ENCODE measurements at regions of chr16 and their contacts with region 1.

Region 1: GRCh38 chr16:4416200-4417032 is at the start of gene CORO7:
- DNase-seq: peak; percentile 96
- H3K4me3 ChIP-seq: peak within 1 kb of the TSS; percentile 98
- H3K27ac ChIP-seq: peak within 1 kb of the TSS; percentile 75
- H3K4me1 ChIP-seq: peaks cover 30% of the 10 kb centered on the region
- CTCF ChIP-seq: no peak
- total RNA-seq, gene CORO7: 64.0 and 77.2 TPM in 2 replicates

Region 2: DNA sequence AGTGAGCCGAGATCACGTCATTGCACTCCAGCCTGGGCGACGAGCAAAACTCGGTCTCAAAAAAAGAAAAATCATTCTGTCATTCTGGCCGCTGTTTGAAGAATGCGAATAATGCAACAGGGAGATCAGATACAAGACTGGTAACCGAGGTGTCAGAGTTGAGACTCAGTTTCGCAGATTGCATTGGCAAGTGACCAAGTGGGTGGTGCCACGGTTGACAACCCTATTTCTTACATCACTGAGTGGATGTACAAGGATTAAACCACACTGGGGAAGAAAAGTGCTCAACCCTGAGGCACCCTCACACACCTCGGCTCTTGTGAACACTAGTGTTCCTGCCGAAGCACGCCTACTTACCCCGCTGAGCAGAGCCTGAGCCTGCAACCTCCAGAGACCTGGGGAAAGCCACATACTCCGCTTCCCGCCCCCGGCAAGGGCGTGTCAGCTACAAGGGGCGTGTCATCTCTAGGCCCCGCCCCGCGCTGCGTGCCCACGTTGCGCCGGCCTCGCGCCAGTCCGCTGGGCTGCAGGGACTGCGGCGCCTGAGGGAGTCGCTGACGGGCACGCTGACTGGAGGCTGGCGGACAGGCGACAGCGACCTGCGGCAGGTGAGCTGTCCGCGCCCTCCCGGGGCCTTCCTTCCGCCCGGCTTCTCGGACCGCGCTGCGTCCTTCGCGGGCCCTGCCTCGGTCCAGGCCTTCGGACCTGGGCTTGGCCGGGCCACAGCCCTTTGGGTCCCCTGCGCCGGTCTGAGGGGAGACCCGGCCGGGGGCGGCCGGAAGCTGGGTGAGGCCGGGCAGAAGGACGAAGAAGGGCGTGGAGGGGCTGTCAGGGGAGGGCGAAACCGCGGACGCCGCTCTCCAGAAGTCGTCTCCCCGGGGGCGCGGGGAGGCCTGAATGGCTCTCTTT is 59.7 kb after region 1 on chr16 and contains the start of gene HMOX2:
- CTCF ChIA-PET with region 1: no interaction called
- POLR2A ChIA-PET with region 1: interaction called, 5 read pairs
- intact Hi-C with region 1: loop called (anchors 2 kb)
- DNase-seq: peak; percentile 96
- H3K4me3 ChIP-seq: peak within 1 kb of the TSS; percentile 97
- H3K27ac ChIP-seq: peak within 1 kb of the TSS; percentile 78
- H3K4me1 ChIP-seq: peaks cover 34% of the 10 kb centered on the region
- CTCF ChIP-seq: peak; percentile 62
- total RNA-seq, gene HMOX2: 46.0 and 55.2 TPM in 2 replicates

Region 3: DNA sequence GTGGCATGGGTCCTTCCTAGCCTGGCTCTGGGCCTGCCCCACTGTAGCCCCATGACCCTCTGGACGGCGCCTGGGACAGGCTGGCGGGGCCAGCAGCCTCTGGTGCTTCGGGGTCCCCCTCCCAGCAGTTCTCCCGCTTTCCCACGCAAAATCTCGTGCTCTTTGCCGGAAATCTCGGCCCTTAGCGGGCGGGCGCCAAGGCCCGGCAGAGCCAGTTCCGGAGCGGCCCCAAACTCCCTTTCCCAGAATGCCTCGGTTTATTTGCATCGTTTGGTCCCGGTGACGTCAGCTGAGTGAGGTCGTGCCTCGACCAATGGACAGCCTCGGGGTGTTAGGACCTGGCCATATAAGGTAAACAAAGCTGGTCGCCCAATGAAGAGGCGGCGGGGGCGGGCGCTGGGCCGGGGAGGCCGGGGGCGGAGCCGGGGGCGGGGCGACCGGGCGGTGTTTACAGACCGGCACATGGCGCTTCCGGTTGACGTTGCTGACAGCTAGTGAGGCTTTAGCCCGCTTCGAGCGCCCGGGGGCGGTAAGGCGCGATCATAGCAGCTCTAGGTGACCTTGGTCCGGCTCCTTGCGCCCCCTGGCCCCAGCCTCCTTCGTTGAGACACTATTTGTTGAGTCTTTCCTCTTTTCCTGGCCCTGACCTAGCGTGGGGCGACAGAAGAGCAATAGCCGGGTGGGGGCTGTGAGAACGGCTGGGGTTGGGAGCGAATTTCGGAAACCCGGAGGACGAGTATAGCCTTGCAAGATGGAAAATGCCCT is 199.8 kb after region 1 on chr16:
- CTCF ChIA-PET with region 1: no interaction called
- POLR2A ChIA-PET with region 1: no interaction called
- intact Hi-C with region 1: loop called (anchors 10 kb)
- DNase-seq: peak; percentile 100
- H3K4me3 ChIP-seq: peak overlapping the region; percentile 91
- H3K27ac ChIP-seq: peak overlapping the region; percentile 97
- H3K4me1 ChIP-seq: peaks cover 44% of the 10 kb centered on the region
- CTCF ChIP-seq: peak; percentile 73

Measured in OCI-LY7 (cell line).